ENCODE measurements at regions of chr11 and their contacts with region 1.

Region 1: DNA sequence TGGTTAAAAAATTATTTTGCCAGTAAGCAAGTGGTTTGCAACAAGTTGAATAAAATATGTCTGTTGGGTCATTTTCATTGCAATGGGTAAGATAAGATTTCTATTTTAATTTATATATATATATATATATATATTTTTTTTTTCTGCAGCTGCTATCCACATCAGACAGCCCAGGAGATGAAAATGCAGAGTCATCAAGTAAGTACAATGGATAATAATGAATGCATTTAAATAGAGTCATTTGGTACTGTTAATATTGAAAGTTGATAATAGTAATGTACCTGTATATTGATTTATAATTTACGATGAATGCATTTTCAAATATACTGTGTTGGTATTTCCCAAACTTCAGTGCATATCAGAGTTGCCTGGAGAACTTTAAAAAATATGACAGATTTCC is 11.5 kb downstream of the BIRC3 start:
- DNase-seq: no peak
- ATAC-seq: no peak

Region 2: DNA sequence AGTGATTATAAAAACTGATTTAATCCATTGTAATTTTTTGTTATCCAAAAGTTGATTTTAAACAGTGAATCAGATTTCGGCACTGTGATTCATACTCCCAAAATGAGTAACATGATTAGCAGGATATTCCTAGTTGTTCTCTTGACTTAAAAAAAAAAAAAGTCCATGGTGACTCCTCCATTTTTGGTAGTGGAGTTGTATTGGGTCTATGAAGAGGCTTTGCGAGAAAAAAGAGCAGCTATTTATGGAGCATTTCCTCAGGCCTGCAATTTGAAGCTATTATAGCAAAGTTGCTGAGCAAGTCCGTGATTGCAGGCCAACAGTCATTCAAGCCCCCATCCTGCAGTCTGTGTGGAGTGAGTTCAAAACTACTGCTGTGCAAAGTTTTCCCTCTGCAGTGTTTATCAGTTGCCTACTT is 189.7 kb before region 1 on chr11:
- intact Hi-C with region 1: no loop called
- DNase-seq: no peak
- ATAC-seq: peak; percentile 59

Region 3: GRCh38 chr11:102293873-102294601 is 34.7 kb before region 1 on chr11:
- intact Hi-C with region 1: loop called (anchors 2 kb)
- DNase-seq: no peak
- ATAC-seq: peak; percentile 84